AG04450 (cell line): ENCODE measurements at regions of chr17 and their contacts with region 1.

Region 1: GRCh38 chr17:64025732-64026294 is 5.4 kb upstream of the ICAM2 start:
- DNase-seq: peak; percentile 33
- H3K4me3 ChIP-seq: no peak overlapping the region
- H3K27ac ChIP-seq: no peak overlapping the region
- H3K27me3 ChIP-seq: peaks cover 2% of the 10 kb centered on the region
- CTCF ChIP-seq: peak; percentile 93

Region 2: GRCh38 chr17:63919311-63919723 is 106.5 kb before region 1 on chr17:
- CTCF ChIA-PET with region 1: interaction called, 110 read pairs
- POLR2A ChIA-PET with region 1: no interaction called
- DNase-seq: peak; percentile 15
- H3K4me3 ChIP-seq: no peak overlapping the region
- H3K27ac ChIP-seq: no peak overlapping the region
- H3K27me3 ChIP-seq: peaks cover 20% of the 10 kb centered on the region
- CTCF ChIP-seq: peak; percentile 94

Region 3: DNA sequence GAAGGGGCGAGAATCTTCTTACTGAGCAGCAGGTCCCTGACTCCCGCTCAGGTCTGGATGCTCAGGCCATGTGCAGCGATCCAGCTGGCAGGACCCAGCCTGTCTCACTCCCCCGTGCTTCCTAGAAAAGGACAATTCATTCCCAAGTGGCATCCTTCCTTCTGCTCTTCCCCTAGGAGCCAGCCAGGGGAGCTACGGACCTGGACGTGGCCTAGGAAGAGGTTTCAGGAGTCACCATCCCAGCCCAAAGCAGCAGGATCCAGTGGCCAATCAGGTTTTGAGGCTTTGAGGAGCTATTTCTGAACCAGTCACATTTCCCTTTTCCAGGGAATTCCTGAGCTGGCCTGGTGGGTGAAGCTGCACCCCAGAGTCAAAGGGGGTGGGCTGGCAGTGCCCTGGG is 85.9 kb before region 1 on chr17:
- CTCF ChIA-PET with region 1: no interaction called
- POLR2A ChIA-PET with region 1: no interaction called
- DNase-seq: no peak
- H3K4me3 ChIP-seq: no peak overlapping the region
- H3K27ac ChIP-seq: no peak overlapping the region
- H3K27me3 ChIP-seq: peaks cover 10% of the 10 kb centered on the region
- CTCF ChIP-seq: no peak

Region 4: GRCh38 chr17:63974594-63975192 is 51.1 kb before region 1 on chr17:
- CTCF ChIA-PET with region 1: no interaction called
- POLR2A ChIA-PET with region 1: no interaction called
- DNase-seq: no peak
- H3K4me3 ChIP-seq: no peak overlapping the region
- H3K27ac ChIP-seq: no peak overlapping the region
- H3K27me3 ChIP-seq: peaks cover 7% of the 10 kb centered on the region
- CTCF ChIP-seq: no peak

Region 5: GRCh38 chr17:64048805-64049204 is 23.0 kb after region 1 on chr17:
- CTCF ChIA-PET with region 1: interaction called, 18 read pairs
- POLR2A ChIA-PET with region 1: interaction called, 7 read pairs
- DNase-seq: no peak
- H3K4me3 ChIP-seq: no peak overlapping the region
- H3K27ac ChIP-seq: no peak overlapping the region
- H3K27me3 ChIP-seq: no peaks in the 10 kb centered on the region
- CTCF ChIP-seq: no peak

Region 6: DNA sequence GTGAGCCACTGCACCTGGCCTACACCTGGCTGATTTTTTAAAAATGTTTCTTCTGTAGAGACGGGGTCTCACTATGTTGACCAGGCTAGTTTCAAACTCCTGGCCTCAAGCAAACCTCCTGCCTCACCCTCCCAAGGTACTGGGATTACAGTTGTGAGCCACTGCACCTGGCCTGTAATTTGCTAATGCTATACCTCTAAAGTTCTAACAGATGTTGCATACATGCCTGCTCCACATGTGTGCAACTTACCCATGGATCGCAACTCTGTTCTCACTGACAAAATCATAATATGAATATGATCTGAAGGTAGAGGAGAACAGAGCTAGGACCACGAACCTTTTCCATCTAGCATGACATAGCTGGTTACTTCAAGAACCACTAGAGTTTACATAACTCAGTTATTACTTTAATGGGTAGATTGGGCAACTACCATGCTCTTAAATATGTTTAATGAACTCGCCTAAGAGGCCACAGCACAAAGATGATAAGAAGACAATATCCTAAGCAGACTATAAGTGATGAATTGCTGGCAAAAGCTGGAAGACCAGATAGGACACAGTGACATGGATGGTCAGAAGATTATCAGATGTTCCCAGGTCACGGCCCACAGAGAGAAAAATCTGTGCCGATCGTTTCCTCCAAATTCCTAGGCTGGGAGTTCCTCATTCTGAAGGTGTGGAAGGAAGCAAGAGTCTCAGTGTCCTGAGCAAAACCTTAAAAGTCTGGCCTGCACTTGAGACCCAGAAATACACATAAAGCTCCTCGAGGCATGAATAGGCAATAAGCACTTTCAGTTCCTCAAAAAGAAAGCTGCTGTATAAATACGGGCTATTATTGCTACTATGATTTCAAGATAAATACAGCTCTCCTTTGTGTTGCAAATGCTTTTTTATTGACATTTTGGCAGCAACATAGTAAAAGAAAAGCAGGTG is 48.2 kb after region 1 on chr17:
- CTCF ChIA-PET with region 1: interaction called, 11 read pairs
- POLR2A ChIA-PET with region 1: interaction called, 3 read pairs
- DNase-seq: no peak
- H3K4me3 ChIP-seq: no peak overlapping the region
- H3K27ac ChIP-seq: no peak overlapping the region
- H3K27me3 ChIP-seq: no peaks in the 10 kb centered on the region
- CTCF ChIP-seq: no peak

Region 7: DNA sequence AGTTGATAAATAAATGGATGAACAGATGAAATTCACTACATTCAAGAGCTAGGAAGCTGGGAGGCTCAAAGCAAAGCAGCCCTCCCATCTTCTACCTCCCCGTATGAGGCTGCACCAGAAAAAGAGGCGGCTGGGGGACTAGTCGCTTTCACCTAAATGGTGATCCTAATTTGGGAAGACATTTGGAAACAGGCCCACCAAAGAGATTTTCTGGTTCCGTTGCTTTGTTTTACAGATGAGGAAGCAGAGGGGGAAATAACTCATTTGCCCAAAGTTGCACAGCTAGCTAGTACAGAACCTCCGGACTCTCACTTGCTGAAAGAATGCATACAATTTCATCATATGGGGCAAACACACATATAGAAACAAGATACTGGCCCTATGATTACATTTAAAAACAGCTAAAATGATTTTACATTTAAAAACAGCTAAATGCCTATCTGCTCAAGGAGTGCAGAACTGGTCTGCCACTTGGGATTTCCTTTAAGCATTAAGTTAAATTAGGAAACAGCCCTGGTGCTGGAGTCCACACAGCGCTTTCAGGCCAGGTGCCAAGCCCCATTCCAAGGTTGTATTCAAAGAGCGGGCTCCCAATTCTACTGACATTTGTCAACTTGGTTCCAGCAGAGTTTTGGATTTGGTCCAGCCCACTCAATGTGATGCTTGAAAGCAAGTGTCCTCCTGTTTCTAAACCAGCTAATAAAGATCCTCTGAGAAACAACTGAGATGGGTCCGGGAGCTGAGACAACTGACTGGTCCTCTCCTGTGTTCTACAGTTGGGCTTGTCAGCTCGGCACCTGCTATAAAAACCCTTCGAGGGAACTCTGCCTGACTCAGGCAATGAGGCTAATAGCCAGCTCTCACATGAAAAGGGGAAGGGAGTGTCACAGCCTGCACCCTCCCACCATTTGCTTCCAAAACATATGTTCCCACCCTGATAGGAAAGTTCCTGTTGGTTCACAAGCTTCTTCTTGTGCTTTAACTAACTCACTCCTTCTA is 92.5 kb after region 1 on chr17:
- CTCF ChIA-PET with region 1: interaction called, 12 read pairs
- POLR2A ChIA-PET with region 1: interaction called, 3 read pairs
- DNase-seq: no peak
- H3K4me3 ChIP-seq: no peak overlapping the region
- H3K27ac ChIP-seq: no peak overlapping the region
- H3K27me3 ChIP-seq: no peaks in the 10 kb centered on the region
- CTCF ChIP-seq: no peak